Activated CD4-positive, alpha-beta memory T cell treated with anti-CD3 and anti-CD28 coated beads for 36 hours (primary cell): ENCODE measurements at regions of chr16 and their contacts with region 1.

Region 1: DNA sequence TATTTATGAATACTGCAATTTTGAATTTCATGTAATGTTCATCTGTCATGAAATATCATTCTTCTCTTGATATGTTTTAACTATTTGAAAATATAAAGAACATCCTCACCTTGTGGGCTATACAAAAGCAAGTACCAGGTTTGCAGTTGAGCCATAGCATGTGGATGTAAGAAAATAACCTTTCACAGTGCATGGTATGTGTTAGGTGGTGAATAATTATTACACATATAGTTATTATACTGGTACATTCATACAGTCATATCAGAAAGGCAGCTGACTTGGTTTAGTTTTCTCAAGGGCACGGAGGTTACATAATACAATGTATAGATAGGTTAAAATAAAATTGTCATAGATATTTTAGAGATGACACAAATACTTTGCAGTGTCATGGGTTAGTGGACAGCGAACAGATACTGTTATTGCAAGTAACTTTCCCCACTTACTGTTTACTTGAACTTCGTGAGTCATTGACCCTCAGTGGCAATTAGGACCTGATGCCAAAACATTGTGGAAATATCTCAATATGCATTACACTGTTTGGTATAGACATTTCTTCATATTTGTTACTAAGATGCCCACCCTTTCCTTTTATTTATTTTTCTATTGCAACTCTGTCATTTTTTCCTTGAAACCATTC is 445.4 kb upstream of the GOT2 start:
- DNase-seq: no peak
- H3K4me3 Mint-ChIP-seq: no peak overlapping the region
- H3K27ac Mint-ChIP-seq: no peak overlapping the region
- H3K4me1 Mint-ChIP-seq: no peaks in the 10 kb centered on the region
- H3K27me3 Mint-ChIP-seq: no peaks in the 10 kb centered on the region

Region 2: GRCh38 chr16:59030923-59031485 is 148.6 kb before region 1 on chr16:
- CTCF ChIA-PET with region 1: no interaction called
- POLR2A ChIA-PET with region 1: no interaction called
- intact Hi-C with region 1: loop called (anchors 5 kb)
- DNase-seq: no peak
- H3K4me3 Mint-ChIP-seq: no peak overlapping the region
- H3K27ac Mint-ChIP-seq: no peak overlapping the region
- H3K4me1 Mint-ChIP-seq: no peaks in the 10 kb centered on the region
- H3K27me3 Mint-ChIP-seq: no peaks in the 10 kb centered on the region